Common myeloid progenitor, CD34-positive (primary cell): ENCODE measurements at regions of chr9 and their contacts with region 1.

Region 1: DNA sequence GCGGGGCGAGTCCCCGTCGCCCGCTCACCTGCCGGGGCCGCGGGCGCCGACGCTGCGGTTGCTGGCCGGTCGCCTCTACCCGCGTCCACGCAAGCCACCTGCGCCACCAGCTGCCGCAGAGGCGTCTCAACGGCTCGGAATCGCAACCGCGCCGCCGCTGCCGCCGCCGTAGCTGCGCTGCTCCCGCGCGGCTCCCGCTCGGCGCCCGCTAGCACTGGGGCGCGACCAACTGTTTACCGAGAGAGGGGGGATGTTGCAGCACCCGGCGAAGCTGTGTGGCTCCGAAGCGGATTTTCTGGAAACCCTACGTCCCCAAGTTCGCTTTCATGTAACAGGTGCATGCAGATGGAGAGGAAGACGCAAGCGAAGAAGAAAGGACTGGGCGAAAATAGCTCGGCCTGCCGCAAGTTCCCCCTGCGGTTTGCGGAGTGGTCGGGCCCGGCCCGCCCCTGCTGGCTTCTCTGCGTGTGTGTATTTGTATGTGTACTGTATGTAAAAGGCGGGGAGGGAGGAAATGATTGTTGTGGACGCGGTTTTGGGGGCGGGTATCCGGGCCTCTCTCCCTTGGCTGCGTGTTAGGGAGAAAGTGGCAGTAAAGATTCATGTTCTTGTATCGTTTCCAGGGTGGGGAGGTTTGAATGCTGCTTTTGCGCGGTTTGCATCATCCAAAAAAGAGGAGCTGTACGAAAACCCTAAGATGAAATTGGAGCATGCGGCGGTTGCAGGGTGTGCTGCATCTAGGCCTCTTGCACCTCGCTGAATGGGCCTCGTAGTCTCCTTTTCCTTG is at the start of gene PSIP1:
- DNase-seq: peak; percentile 94 to 97 (median 97)
- H3K4me3 ChIP-seq: peak within 1 kb of the TSS; percentile 90 to 99 (median 92)
- H3K27ac ChIP-seq: peak within 1 kb of the TSS; percentile 99 to 100
- H3K4me1 ChIP-seq: peaks cover 19 to 47% (median 35%) of the 10 kb centered on the region in 4 experiments
- H3K27me3 ChIP-seq: no peaks in the 10 kb centered on the region

Region 2: GRCh38 chr9:15357050-15357653 is 153.8 kb before region 1 on chr9:
- CTCF ChIA-PET with region 1: no interaction called
- POLR2A ChIA-PET with region 1: no interaction called
- DNase-seq: peak; percentile 89 to 97 (median 96)
- H3K4me3 ChIP-seq: peak overlapping the region in 1 of 7 experiments; percentile 25
- H3K27ac ChIP-seq: peak overlapping the region; percentile 62 to 83
- H3K4me1 ChIP-seq: peaks cover 4 to 24% (median 13%) of the 10 kb centered on the region in 4 experiments
- H3K27me3 ChIP-seq: no peaks in the 10 kb centered on the region

Region 3: GRCh38 chr9:15469406-15469805 is 41.6 kb before region 1 on chr9:
- CTCF ChIA-PET with region 1: no interaction called
- POLR2A ChIA-PET with region 1: no interaction called
- DNase-seq: peak in 2 of 3 donors; percentile 11 to 13
- H3K4me3 ChIP-seq: no peak overlapping the region
- H3K27ac ChIP-seq: no peak overlapping the region
- H3K4me1 ChIP-seq: no peaks in the 10 kb centered on the region
- H3K27me3 ChIP-seq: no peaks in the 10 kb centered on the region

Region 4: DNA sequence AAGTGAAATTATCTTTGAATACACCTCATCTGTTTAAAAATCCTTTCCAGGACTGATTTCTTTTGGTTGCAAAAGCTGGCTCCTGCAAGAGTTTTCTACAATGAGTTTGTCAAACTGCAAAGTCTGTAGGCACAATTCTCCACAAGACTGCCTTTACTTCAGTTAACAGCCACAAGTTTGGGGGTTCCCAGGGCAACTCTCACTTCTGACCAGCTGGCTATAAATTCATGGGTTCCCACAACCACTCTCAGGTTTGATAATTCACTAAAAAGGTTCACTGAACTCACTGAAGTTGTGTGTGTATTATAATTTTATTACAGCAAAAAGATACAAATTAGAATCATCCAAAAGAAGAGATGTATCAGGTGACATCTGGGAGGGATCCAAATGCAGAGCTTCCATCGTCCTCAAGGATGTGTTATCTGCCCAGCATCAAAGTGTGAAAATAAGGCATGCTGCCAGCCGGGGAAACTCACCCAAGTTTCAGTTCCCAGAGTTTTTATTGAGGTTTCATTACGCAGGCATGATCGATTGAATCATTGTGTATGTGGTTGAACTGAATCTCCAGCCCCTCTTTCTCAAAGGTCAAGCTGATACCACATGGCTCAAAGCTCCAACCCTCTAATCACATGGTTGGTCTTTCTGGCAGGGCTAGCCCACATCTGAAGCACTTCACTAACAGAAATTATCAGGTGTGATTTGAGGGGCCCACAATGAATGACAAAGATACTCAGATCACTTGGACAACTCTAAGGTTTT is 18.8 kb after region 1 on chr9:
- CTCF ChIA-PET with region 1: interaction called, 22 read pairs
- POLR2A ChIA-PET with region 1: no interaction called
- DNase-seq: no peak
- H3K4me3 ChIP-seq: no peak overlapping the region
- H3K27ac ChIP-seq: no peak overlapping the region
- H3K4me1 ChIP-seq: peaks cover 0 to 7% (median 3%) of the 10 kb centered on the region in 4 experiments
- H3K27me3 ChIP-seq: no peaks in the 10 kb centered on the region